H1 (cell line): ENCODE measurements at regions of chr13 and their contacts with region 1.

Region 1: GRCh38 chr13:27362064-27362883 is 62.1 kb upstream of the GTF3A start:
- DNase-seq: peak; percentile 87 to 95
- H3K4me3 ChIP-seq: peak overlapping the region; percentile 39 to 87 (median 78)
- H3K27ac ChIP-seq: no peak overlapping the region
- H3K4me1 ChIP-seq: peaks cover 2 to 8% (median 4%) of the 10 kb centered on the region in 4 experiments
- H3K27me3 ChIP-seq: peaks cover 0 to 8% (median 4%) of the 10 kb centered on the region in 4 experiments; a peak in 5 of 7 replicates
- CTCF ChIP-seq: peak; percentile 90 to 99 (median 98)
- EP300 ChIP-seq: no peak; a peak in 1 of 3 replicates
- POLR2A ChIP-seq: peak in 1 of 2 experiments; percentile 71; a peak in 1 of 3 replicates
- RAD21 ChIP-seq: peak; percentile 94 to 95

Region 2: GRCh38 chr13:26946684-26947343 is 415.5 kb before region 1 on chr13:
- CTCF ChIA-PET with region 1: interaction called, 128 read pairs
- POLR2A ChIA-PET with region 1: interaction called, 4 read pairs
- DNase-seq: no peak
- H3K4me3 ChIP-seq: no peak overlapping the region
- H3K27ac ChIP-seq: no peak overlapping the region
- H3K4me1 ChIP-seq: peaks cover 0 to 3% (median 0%) of the 10 kb centered on the region in 4 experiments; a peak in 1 of 7 replicates
- H3K27me3 ChIP-seq: no peaks in the 10 kb centered on the region
- CTCF ChIP-seq: peak in 2 of 3 experiments; percentile 71 to 82; a peak in 3 of 4 replicates
- EP300 ChIP-seq: no peak
- POLR2A ChIP-seq: no peak
- RAD21 ChIP-seq: peak; percentile 94 to 96

Region 3: GRCh38 chr13:26977556-26977955 is 384.7 kb before region 1 on chr13:
- CTCF ChIA-PET with region 1: interaction called, 164 read pairs
- POLR2A ChIA-PET with region 1: no interaction called
- DNase-seq: no peak
- H3K4me3 ChIP-seq: no peak overlapping the region
- H3K27ac ChIP-seq: no peak overlapping the region
- H3K4me1 ChIP-seq: no peaks in the 10 kb centered on the region; a peak in 2 of 7 replicates
- H3K27me3 ChIP-seq: no peaks in the 10 kb centered on the region
- CTCF ChIP-seq: no peak
- EP300 ChIP-seq: no peak
- POLR2A ChIP-seq: no peak
- RAD21 ChIP-seq: no peak

Region 4: DNA sequence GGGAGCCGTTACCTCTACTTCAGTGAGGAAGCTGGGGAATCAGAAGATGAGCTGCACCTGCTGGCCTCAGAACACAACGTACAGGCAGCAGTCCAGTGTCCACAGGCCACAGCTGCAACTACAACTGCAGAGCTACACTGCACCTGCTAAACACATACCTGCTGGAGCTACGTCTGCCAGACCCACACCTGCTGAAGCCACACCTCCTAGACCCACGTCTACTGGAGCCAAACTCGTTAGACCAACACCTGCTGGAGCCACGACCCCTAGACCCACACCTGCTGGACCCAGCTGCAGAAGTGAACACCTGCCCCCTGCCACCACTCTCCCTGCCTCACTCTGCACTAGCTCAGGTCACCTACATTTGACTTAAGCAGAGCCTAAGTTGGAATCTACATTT is 360.6 kb before region 1 on chr13:
- CTCF ChIA-PET with region 1: interaction called, 13 read pairs
- POLR2A ChIA-PET with region 1: no interaction called
- DNase-seq: no peak
- H3K4me3 ChIP-seq: no peak overlapping the region
- H3K27ac ChIP-seq: no peak overlapping the region
- H3K4me1 ChIP-seq: peaks cover 0 to 13% (median 9%) of the 10 kb centered on the region in 4 experiments; a peak in 6 of 7 replicates
- H3K27me3 ChIP-seq: peaks cover 0 to 13% (median 5%) of the 10 kb centered on the region in 4 experiments; a peak in 4 of 7 replicates
- CTCF ChIP-seq: peak in 1 of 3 experiments; percentile 4; a peak in 1 of 4 replicates
- EP300 ChIP-seq: no peak
- POLR2A ChIP-seq: no peak
- RAD21 ChIP-seq: no peak

Region 5: GRCh38 chr13:27283906-27284493 is 78.3 kb before region 1 on chr13:
- CTCF ChIA-PET with region 1: interaction called, 10 read pairs
- POLR2A ChIA-PET with region 1: no interaction called
- DNase-seq: no peak
- H3K4me3 ChIP-seq: no peak overlapping the region
- H3K27ac ChIP-seq: no peak overlapping the region
- H3K4me1 ChIP-seq: no peaks in the 10 kb centered on the region
- H3K27me3 ChIP-seq: no peaks in the 10 kb centered on the region
- CTCF ChIP-seq: peak in 2 of 3 experiments; percentile 25 to 28; a peak in 2 of 4 replicates
- EP300 ChIP-seq: no peak
- POLR2A ChIP-seq: no peak
- RAD21 ChIP-seq: peak; percentile 65 to 69

Region 6: GRCh38 chr13:27374650-27375049 is 12.4 kb after region 1 on chr13:
- CTCF ChIA-PET with region 1: interaction called, 93 read pairs
- POLR2A ChIA-PET with region 1: no interaction called
- DNase-seq: no peak
- H3K4me3 ChIP-seq: no peak overlapping the region
- H3K27ac ChIP-seq: no peak overlapping the region
- H3K4me1 ChIP-seq: peaks cover 0 to 5% (median 3%) of the 10 kb centered on the region in 4 experiments; a peak in 2 of 7 replicates
- H3K27me3 ChIP-seq: peaks cover 0 to 3% (median 1%) of the 10 kb centered on the region in 4 experiments; a peak in 2 of 7 replicates
- CTCF ChIP-seq: peak; percentile 46 to 85 (median 82)
- EP300 ChIP-seq: no peak
- POLR2A ChIP-seq: no peak
- RAD21 ChIP-seq: peak; percentile 87 to 88

Region 7: GRCh38 chr13:27516103-27516502 is 153.8 kb after region 1 on chr13:
- CTCF ChIA-PET with region 1: interaction called, 14 read pairs
- POLR2A ChIA-PET with region 1: no interaction called
- DNase-seq: no peak
- H3K4me3 ChIP-seq: no peak overlapping the region
- H3K27ac ChIP-seq: no peak overlapping the region
- H3K4me1 ChIP-seq: no peaks in the 10 kb centered on the region
- H3K27me3 ChIP-seq: no peaks in the 10 kb centered on the region
- CTCF ChIP-seq: no peak
- EP300 ChIP-seq: no peak
- POLR2A ChIP-seq: no peak
- RAD21 ChIP-seq: no peak